Head of caudate nucleus (tissue), 42 donors: ENCODE measurements at regions of chr12 and their contacts with region 1.

Region 1: GRCh38 chr12:124939428-124940142 is 25.1 kb upstream of the UBC start:
- DNase-seq: peak; percentile 71 to 96 (median 90)

Region 2: GRCh38 chr12:124917135-124917840 is 22.3 kb before region 1 on chr12:
- intact Hi-C with region 1: loop called (anchors 1 kb)
- DNase-seq: peak; percentile 92 to 99 (median 98)

Region 3: GRCh38 chr12:124927201-124928094 is 12.1 kb before region 1 on chr12:
- intact Hi-C with region 1: loop called (anchors 1 kb)
- DNase-seq: peak; percentile 84 to 97 (median 93)